GM10248 (cell line): ENCODE measurements at regions of chr7 and their contacts with region 1.

Region 1: DNA sequence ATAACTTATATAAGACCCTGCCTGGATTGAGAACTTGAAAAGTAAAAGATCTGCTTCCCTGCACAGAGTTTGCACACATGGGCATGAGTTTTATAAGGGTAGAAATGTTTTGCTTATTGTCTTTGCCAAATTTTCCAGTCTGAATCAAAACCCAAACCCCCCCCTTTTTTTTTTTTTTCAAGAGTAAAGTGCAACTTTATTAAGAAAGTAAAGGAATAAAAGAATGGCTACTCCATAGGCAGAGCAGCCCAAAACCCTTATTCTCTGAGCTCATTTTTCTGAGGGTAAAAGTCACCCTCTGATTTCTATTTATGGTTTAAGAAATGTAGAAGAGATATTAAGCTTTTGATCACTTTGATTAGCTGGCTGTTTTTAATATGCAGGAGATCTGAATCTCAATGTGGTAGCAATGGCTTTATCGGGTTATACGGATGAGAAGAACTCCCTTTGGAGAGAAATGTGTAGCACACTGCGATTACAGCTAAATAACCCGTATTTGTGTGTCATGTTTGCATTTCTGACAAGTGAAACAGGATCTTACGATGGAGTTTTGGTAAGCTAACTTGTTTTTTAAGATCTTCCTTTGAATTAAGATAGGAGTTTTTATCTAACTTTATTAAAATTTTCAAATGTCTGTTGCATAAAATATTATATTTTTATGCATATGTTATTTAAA is 18.7 kb downstream of the MIOS start:
- DNase-seq: no peak
- CTCF ChIP-seq: no peak

Region 2: GRCh38 chr7:7014827-7015610 is 570.4 kb before region 1 on chr7:
- CTCF ChIA-PET with region 1: no interaction called
- POLR2A ChIA-PET with region 1: interaction called, 11 read pairs
- DNase-seq: no peak
- CTCF ChIP-seq: no peak